ENCODE measurements at regions of chr6 and their contacts with region 1.

Region 1: GRCh38 chr6:127844529-127844928 is 56.3 kb downstream of the THEMIS start:
- DNase-seq: no peak
- ATAC-seq: no peak
- H3K4me3 ChIP-seq: no peak overlapping the region
- H3K4me3 Mint-ChIP-seq: peak overlapping the region in 2 of 10 donors; percentile 2 to 14
- H3K27ac ChIP-seq: no peak overlapping the region
- H3K27ac Mint-ChIP-seq: peak overlapping the region in 2 of 9 donors; percentile 1 to 8
- H3K4me1 ChIP-seq: peaks cover 0 to 16% of the 10 kb centered on the region in 2 donors
- H3K4me1 Mint-ChIP-seq: peaks cover 22 to 75% (median 58%) of the 10 kb centered on the region in 7 donors
- H3K27me3 ChIP-seq: no peaks in the 10 kb centered on the region
- H3K27me3 Mint-ChIP-seq: no peaks in the 10 kb centered on the region

Region 2: GRCh38 chr6:127833336-127833735 is 11.2 kb before region 1 on chr6:
- CTCF ChIA-PET with region 1: no interaction called
- POLR2A ChIA-PET with region 1: interaction called, 5 read pairs
- intact Hi-C with region 1: loop called in 1 of 2 experiments (anchors 1 kb)
- DNase-seq: no peak
- ATAC-seq: no peak
- H3K4me3 ChIP-seq: no peak overlapping the region
- H3K4me3 Mint-ChIP-seq: no peak overlapping the region
- H3K27ac ChIP-seq: no peak overlapping the region
- H3K27ac Mint-ChIP-seq: peak overlapping the region in 2 of 9 donors; percentile 27 to 42
- H3K4me1 ChIP-seq: peaks cover 0 to 4% of the 10 kb centered on the region in 2 donors
- H3K4me1 Mint-ChIP-seq: peaks cover 10 to 74% (median 58%) of the 10 kb centered on the region in 7 donors
- H3K27me3 ChIP-seq: no peaks in the 10 kb centered on the region
- H3K27me3 Mint-ChIP-seq: no peaks in the 10 kb centered on the region